ENCODE measurements at regions of chr1 and their contacts with region 1.

Region 1: DNA sequence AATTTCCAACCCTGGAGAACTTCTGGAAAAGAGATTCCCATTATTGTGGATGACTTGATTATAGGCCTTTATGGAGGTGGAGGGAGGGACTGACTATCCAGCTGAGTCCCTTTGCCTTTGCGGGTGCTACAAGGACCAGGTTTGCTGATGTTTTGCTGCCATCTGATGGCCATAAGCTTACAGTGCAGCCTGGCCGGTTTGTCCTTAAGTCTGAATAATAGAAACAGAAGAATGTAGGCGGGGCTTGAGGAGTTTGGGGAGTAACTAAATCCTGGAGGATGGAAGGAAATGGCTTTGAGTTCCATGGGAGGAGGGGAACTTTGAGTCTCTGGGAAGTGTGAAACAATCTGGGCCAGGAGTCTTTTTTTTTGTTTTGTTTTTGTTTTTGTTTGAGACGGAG is 55.7 kb upstream of the CD1D start:
- DNase-seq: peak; percentile 89
- ATAC-seq: peak; percentile 92
- H3K4me3 ChIP-seq: no peak overlapping the region
- H3K27ac ChIP-seq: no peak overlapping the region
- H3K4me1 ChIP-seq: 0 out of 4 replicates have a peak, but pooled peaks cover 0 to 2% of the 10 kb centered on the region in 2 experiments
- H3K27me3 ChIP-seq: peaks cover 5% of the 10 kb centered on the region; the same call in 1 of the 2 replicates
- CTCF ChIP-seq: peak; percentile 94 to 96 (median 95)
- POLR2A ChIP-seq: no peak
- RAD21 ChIP-seq: peak; percentile 97

Region 2: GRCh38 chr1:157163273-157164127 is 961.5 kb before region 1 on chr1:
- CTCF ChIA-PET with region 1: interaction called, 7 read pairs
- POLR2A ChIA-PET with region 1: no interaction called
- RAD21 ChIA-PET with region 1: no interaction called
- intact Hi-C with region 1: loop called (anchors 10 kb)
- DNase-seq: peak; percentile 50
- ATAC-seq: peak; percentile 96
- H3K4me3 ChIP-seq: no peak overlapping the region
- H3K27ac ChIP-seq: no peak overlapping the region
- H3K4me1 ChIP-seq: peaks cover 0 to 7% of the 10 kb centered on the region in 2 experiments; a peak in 2 of 4 replicates
- H3K27me3 ChIP-seq: no peaks in the 10 kb centered on the region
- CTCF ChIP-seq: peak; percentile 73 to 98 (median 90)
- POLR2A ChIP-seq: no peak
- RAD21 ChIP-seq: peak; percentile 44; the same call in 1 of the 2 replicates

Region 3: DNA sequence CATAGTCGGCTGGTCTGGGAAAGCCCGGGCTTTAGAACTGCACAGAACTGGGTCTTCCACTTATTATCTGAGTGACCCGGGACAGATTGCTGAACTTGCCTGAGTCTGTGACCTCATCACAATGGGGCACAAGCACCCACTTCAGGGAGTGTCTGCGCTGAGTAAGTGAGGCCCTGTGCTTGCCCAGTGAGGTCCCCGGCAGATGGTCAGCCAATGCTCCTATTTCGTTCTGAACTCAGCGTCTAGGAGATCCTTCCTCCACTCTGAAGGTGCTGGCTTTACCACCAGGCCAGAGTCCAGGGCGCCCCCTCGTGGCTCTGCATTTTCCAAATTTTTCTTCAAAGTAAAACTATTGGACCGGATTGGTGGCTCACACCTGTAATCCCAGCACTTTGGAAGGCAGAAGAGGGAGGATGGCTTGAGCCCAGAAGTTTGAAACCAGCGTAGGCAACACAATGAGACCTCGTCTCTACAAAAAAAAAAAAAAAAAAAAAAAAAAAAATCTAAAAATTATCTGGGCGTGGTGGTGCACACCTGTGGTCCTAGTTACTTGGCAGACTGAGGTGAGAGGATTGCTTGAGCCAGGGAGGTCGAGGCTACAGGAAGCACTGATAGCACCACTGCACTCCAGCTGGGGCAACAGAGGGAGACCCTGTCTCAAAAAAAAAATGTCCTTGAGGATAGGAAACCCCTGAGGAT is 634.4 kb before region 1 on chr1:
- CTCF ChIA-PET with region 1: no interaction called
- POLR2A ChIA-PET with region 1: no interaction called
- RAD21 ChIA-PET with region 1: no interaction called
- intact Hi-C with region 1: loop called (anchors 10 kb)
- DNase-seq: peak; percentile 39
- ATAC-seq: peak; percentile 78
- H3K4me3 ChIP-seq: no peak overlapping the region
- H3K27ac ChIP-seq: no peak overlapping the region
- H3K4me1 ChIP-seq: peaks cover 0 to 2% of the 10 kb centered on the region in 2 experiments; a peak in 1 of 4 replicates
- H3K27me3 ChIP-seq: peaks cover 22% of the 10 kb centered on the region
- CTCF ChIP-seq: peak; percentile 71 to 82 (median 75)
- POLR2A ChIP-seq: no peak
- RAD21 ChIP-seq: peak; percentile 67

Region 4: DNA sequence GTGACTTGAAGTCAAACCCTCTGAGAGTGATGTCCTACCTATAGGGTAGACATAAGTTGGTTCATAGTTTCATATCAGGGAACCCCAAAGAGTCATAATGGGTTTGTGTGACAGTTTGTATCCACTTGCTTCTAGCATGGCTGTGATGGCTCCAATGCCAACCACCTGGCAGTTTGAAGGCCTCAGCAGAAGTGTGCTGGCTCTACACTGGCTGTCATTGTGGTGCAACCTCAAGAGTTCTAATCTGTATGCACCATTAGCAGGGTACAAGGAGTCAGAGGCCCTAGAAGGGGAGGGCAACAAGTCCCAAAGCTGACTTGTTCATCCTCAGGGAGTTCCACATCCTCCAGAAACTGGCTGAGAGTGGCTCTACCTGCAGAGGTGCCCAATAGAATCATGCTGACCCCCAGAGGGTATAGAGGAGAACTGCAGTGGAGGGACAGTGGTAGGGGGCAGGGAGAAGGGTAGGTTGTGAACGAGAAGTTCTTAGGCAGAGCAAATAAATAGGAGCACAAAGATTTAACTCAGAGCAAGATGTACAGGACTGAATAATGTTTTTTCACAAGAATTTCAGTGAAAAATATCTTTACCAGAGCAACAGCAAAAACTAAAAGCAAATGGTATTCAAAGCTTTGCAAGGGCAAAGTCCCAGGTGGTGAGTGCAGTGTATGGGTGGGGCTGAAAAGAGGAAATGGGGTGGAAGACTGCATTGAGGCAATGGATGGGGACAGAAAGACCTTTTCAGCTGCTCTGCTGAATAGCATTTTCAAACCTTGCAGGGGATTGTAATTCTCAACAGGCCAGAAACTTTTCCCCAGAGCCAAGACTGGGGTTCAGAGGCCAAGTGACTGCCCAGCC is 351.3 kb before region 1 on chr1:
- CTCF ChIA-PET with region 1: interaction called, 3 read pairs
- POLR2A ChIA-PET with region 1: no interaction called
- RAD21 ChIA-PET with region 1: no interaction called
- intact Hi-C with region 1: loop called (anchors 2 kb)
- DNase-seq: no peak
- ATAC-seq: peak; percentile 90
- H3K4me3 ChIP-seq: no peak overlapping the region
- H3K27ac ChIP-seq: no peak overlapping the region
- H3K4me1 ChIP-seq: no peaks in the 10 kb centered on the region
- H3K27me3 ChIP-seq: peaks cover 28% of the 10 kb centered on the region
- CTCF ChIP-seq: peak in 2 of 3 experiments; percentile 57; a peak in 5 of 6 replicates
- POLR2A ChIP-seq: no peak
- RAD21 ChIP-seq: peak; percentile 48

Region 5: DNA sequence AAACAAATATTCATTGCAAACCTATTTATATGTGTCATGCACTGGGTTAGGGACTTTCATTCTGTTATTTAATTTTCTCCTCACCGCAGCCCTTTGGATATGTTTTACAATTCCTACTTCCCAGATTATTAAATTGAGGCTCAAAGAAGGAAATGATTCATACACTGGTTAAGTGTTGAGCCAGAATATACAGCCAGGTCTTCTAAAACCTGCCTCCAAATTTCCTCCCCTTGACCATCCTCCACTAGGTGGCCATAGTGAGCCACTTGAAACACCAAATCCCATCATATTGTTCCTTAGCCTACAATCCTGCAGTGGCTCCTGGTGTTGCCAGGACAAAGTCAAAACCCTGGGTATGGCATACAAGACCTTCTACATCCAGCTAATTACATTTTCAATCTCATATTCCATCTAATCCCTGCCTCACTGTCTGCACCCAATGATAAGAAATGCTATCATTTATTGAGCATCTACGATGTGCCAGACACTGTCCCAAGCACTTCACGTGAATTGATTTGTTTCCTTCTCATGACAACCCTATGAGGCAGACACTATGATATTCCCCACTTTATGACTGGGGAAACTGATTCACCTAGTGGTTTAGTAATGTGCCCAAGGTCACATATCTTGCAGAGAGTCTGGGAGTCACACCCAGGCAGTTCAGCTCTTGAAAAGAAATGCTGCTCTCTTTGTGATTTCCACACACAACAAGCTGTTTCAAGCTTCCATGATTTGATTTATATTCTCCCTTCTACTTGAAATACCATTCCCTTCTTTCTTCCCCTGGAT is 155.1 kb before region 1 on chr1:
- CTCF ChIA-PET with region 1: interaction called, 393 read pairs
- POLR2A ChIA-PET with region 1: interaction called, 3 read pairs
- RAD21 ChIA-PET with region 1: interaction called, 4 read pairs
- intact Hi-C with region 1: loop called (anchors 1 kb)
- DNase-seq: peak; percentile 41
- ATAC-seq: peak; percentile 93
- H3K4me3 ChIP-seq: no peak overlapping the region
- H3K27ac ChIP-seq: no peak overlapping the region
- H3K4me1 ChIP-seq: no peaks in the 10 kb centered on the region
- H3K27me3 ChIP-seq: no peaks in the 10 kb centered on the region
- CTCF ChIP-seq: peak; percentile 88 to 93 (median 89)
- POLR2A ChIP-seq: no peak
- RAD21 ChIP-seq: peak; percentile 80

Region 6: DNA sequence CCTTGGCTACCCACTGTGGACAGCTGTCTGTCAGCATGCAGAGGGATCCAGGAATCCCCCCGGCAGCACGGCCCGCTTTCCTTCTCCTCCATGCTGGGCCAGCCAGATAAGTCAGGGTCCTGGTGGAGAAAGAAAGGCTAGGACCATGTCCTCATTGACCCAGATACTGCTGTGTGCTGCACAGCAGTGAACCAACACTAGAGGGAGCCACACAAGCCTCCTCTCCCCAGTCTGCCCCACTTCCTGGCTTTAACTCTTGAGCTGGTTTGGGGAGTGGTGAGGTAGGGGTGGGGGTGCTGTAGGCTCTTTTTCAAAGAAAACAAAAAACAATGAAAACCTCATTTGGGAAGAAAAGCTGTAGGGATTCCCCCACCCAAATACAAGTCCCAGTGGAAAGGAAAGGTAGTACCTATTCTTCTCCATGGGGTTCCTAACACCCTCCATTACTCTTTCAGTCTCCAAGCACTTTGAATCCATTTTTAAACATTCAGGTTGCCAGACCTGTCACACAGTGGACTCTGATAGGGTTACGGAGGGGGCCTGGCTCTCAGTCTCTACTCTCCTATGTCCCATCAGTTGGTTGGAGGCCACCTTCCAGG is 29.2 kb before region 1 on chr1:
- CTCF ChIA-PET with region 1: interaction called, 64 read pairs
- POLR2A ChIA-PET with region 1: interaction called, 3 read pairs
- RAD21 ChIA-PET with region 1: interaction called in 1 of 2 experiments, 6 read pairs
- intact Hi-C with region 1: loop called (anchors 1 kb)
- DNase-seq: no peak
- ATAC-seq: peak; percentile 84
- H3K4me3 ChIP-seq: no peak overlapping the region
- H3K27ac ChIP-seq: no peak overlapping the region
- H3K4me1 ChIP-seq: peaks cover 0 to 7% of the 10 kb centered on the region in 2 experiments; a peak in 3 of 4 replicates
- H3K27me3 ChIP-seq: no peaks in the 10 kb centered on the region
- CTCF ChIP-seq: peak; percentile 60 to 93 (median 92); a peak in 5 of 6 replicates
- POLR2A ChIP-seq: no peak
- RAD21 ChIP-seq: peak; percentile 39